ENCODE measurements at regions of chr12 and their contacts with region 1.

Region 1: DNA sequence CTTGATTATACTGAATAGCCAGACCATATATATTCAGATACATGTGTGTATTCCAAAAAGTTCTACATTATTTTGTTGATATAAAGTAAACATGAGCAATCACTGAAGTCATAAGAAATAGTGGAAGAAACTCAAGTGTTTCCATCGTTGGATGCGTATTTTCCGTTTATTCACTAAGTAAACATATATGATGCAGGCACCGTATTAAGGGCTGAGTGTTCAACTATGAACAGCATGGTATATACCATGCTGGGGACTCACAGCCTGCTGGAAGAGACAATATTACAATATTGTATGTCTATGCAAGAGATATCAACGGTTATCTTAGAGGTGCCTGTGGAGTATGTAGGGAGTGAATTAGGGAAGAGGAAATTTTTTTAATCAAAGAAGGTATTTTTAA is 1.2 kb downstream of the PYROXD1 start:
- DNase-seq: no peak
- H3K4me3 ChIP-seq: no peak overlapping the region; the same call in 1 of the 2 replicates
- H3K4me3 Mint-ChIP-seq: peak overlapping the region; percentile 85
- H3K27ac Mint-ChIP-seq: peak overlapping the region; percentile 81
- H3K4me1 ChIP-seq: peaks cover 9% of the 10 kb centered on the region
- H3K4me1 Mint-ChIP-seq: peaks cover 8% of the 10 kb centered on the region
- H3K27me3 ChIP-seq: peaks cover 5% of the 10 kb centered on the region
- H3K27me3 Mint-ChIP-seq: peaks cover 22% of the 10 kb centered on the region
- CTCF ChIP-seq: no peak

Region 2: DNA sequence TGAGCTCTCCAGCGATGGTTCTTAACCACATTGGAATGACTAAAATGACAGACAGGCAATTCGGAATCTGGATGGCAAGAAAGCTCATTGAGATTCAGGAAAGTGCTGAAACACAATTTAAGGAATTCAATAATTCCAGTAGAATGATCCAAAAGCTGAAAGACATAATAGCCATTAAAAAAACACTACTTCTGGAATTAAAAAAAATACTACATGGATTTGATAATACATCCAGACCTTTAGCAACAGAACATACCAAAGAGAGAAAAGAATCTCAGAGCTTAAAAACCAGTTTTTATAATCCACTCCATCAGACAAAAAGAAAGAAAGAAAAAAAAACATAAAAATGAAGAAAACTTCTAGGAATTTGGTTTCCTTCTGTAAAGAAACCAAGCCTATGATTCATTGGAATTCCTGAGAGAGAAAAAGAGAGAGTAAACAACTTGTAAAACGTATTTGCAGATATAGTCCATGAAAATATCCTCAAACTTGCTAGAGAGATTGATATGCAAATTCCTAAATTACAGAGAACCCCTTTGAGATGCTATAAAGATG is 254.8 kb before region 1 on chr12:
- CTCF ChIA-PET with region 1: no interaction called
- POLR2A ChIA-PET with region 1: no interaction called
- intact Hi-C with region 1: no loop called
- DNase-seq: no peak
- H3K4me3 ChIP-seq: no peak overlapping the region
- H3K4me3 Mint-ChIP-seq: no peak overlapping the region
- H3K27ac Mint-ChIP-seq: no peak overlapping the region
- H3K4me1 ChIP-seq: peaks cover 11% of the 10 kb centered on the region; the same call in 1 of the 2 replicates
- H3K4me1 Mint-ChIP-seq: peaks cover 12% of the 10 kb centered on the region
- H3K27me3 ChIP-seq: no peaks in the 10 kb centered on the region
- H3K27me3 Mint-ChIP-seq: peaks cover 6% of the 10 kb centered on the region
- CTCF ChIP-seq: no peak

Region 3: GRCh38 chr12:21248679-21249078 is 190.0 kb before region 1 on chr12:
- CTCF ChIA-PET with region 1: interaction called, 3 read pairs
- POLR2A ChIA-PET with region 1: no interaction called
- intact Hi-C with region 1: loop called (anchors 1 kb)
- DNase-seq: no peak
- H3K4me3 ChIP-seq: no peak overlapping the region
- H3K4me3 Mint-ChIP-seq: no peak overlapping the region
- H3K27ac Mint-ChIP-seq: no peak overlapping the region
- H3K4me1 ChIP-seq: no peaks in the 10 kb centered on the region
- H3K4me1 Mint-ChIP-seq: no peaks in the 10 kb centered on the region
- H3K27me3 ChIP-seq: no peaks in the 10 kb centered on the region
- H3K27me3 Mint-ChIP-seq: peaks cover 7% of the 10 kb centered on the region
- CTCF ChIP-seq: peak in 1 of 2 experiments; percentile 39

Region 4: GRCh38 chr12:21296751-21297406 is 141.8 kb before region 1 on chr12:
- CTCF ChIA-PET with region 1: interaction called, 10 read pairs
- POLR2A ChIA-PET with region 1: no interaction called
- intact Hi-C with region 1: loop called (anchors 1 kb)
- DNase-seq: peak in 1 of 2 experiments; percentile 27
- H3K4me3 ChIP-seq: no peak overlapping the region
- H3K4me3 Mint-ChIP-seq: no peak overlapping the region
- H3K27ac Mint-ChIP-seq: no peak overlapping the region
- H3K4me1 ChIP-seq: no peaks in the 10 kb centered on the region
- H3K4me1 Mint-ChIP-seq: no peaks in the 10 kb centered on the region
- H3K27me3 ChIP-seq: no peaks in the 10 kb centered on the region
- H3K27me3 Mint-ChIP-seq: peaks cover 3% of the 10 kb centered on the region
- CTCF ChIP-seq: peak; percentile 87 to 90

Region 5: GRCh38 chr12:21308785-21309184 is 129.9 kb before region 1 on chr12:
- CTCF ChIA-PET with region 1: no interaction called
- POLR2A ChIA-PET with region 1: no interaction called
- intact Hi-C with region 1: loop called (anchors 1 kb)
- DNase-seq: no peak
- H3K4me3 ChIP-seq: no peak overlapping the region
- H3K4me3 Mint-ChIP-seq: no peak overlapping the region
- H3K27ac Mint-ChIP-seq: no peak overlapping the region
- H3K4me1 ChIP-seq: no peaks in the 10 kb centered on the region
- H3K4me1 Mint-ChIP-seq: no peaks in the 10 kb centered on the region
- H3K27me3 ChIP-seq: no peaks in the 10 kb centered on the region; the same call in 1 of the 2 replicates
- H3K27me3 Mint-ChIP-seq: peaks cover 21% of the 10 kb centered on the region
- CTCF ChIP-seq: no peak

Region 6: GRCh38 chr12:21413369-21414277 is 25.0 kb before region 1 on chr12:
- CTCF ChIA-PET with region 1: interaction called, 3 read pairs
- POLR2A ChIA-PET with region 1: interaction called, 8 read pairs
- intact Hi-C with region 1: loop called (anchors 2 kb)
- DNase-seq: peak; percentile 58 to 66
- H3K4me3 ChIP-seq: no peak overlapping the region
- H3K4me3 Mint-ChIP-seq: no peak overlapping the region
- H3K27ac Mint-ChIP-seq: no peak overlapping the region
- H3K4me1 ChIP-seq: peaks cover 20% of the 10 kb centered on the region
- H3K4me1 Mint-ChIP-seq: peaks cover 18% of the 10 kb centered on the region
- H3K27me3 ChIP-seq: no peaks in the 10 kb centered on the region
- H3K27me3 Mint-ChIP-seq: no peaks in the 10 kb centered on the region
- CTCF ChIP-seq: no peak

Region 7: GRCh38 chr12:21428241-21428640 is 10.4 kb before region 1 on chr12:
- CTCF ChIA-PET with region 1: no interaction called
- POLR2A ChIA-PET with region 1: no interaction called
- intact Hi-C with region 1: no loop called
- DNase-seq: no peak
- H3K4me3 ChIP-seq: no peak overlapping the region
- H3K4me3 Mint-ChIP-seq: no peak overlapping the region
- H3K27ac Mint-ChIP-seq: no peak overlapping the region
- H3K4me1 ChIP-seq: no peaks in the 10 kb centered on the region
- H3K4me1 Mint-ChIP-seq: no peaks in the 10 kb centered on the region
- H3K27me3 ChIP-seq: no peaks in the 10 kb centered on the region
- H3K27me3 Mint-ChIP-seq: peaks cover 7% of the 10 kb centered on the region
- CTCF ChIP-seq: no peak

Region 8: DNA sequence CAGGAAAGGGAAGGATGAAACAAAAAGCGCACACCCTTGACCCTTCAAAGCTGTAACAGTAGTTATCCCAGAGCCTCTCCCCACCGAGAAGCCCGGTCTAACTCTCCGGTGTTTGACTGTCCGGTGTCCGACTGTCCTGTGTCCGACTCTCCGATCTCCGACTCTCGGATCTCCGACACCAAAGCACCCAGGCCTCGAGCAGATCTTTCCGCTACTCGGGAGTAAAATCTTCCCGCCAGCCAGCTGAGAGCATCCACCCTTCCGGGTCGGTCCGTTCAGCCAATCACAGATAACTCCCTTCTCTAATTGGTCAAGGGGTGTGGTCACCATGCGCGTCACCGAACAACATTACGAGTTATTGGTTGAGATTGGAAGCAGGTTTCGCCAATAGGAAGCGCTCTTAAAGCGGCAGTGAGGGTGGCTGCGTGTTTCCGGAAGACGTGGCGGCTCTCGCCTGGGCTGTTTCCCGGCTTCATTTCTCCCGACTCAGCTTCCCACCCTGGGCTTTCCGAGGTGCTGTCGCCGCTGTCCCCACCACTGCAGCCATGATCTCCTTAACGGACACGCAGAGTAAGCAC is 62.8 kb after region 1 on chr12 and contains the starts of genes GOLT1B and RECQL:
- CTCF ChIA-PET with region 1: no interaction called
- POLR2A ChIA-PET with region 1: interaction called, 5 read pairs
- intact Hi-C with region 1: loop called (anchors 1 kb)
- DNase-seq: peak; percentile 98
- H3K4me3 ChIP-seq: peak within 1 kb of the TSS; percentile 70
- H3K4me3 Mint-ChIP-seq: no peak within 1 kb of the TSS
- H3K27ac Mint-ChIP-seq: no peak within 1 kb of the TSS
- H3K4me1 ChIP-seq: no peaks in the 10 kb centered on the region; the same call in 1 of the 2 replicates
- H3K4me1 Mint-ChIP-seq: peaks cover 9% of the 10 kb centered on the region
- H3K27me3 ChIP-seq: no peaks in the 10 kb centered on the region
- H3K27me3 Mint-ChIP-seq: no peaks in the 10 kb centered on the region
- CTCF ChIP-seq: no peak
- total RNA-seq, gene GOLT1B: 75.9 and 81.7 TPM in 2 replicates
- total RNA-seq, gene RECQL: 50.7 and 55.3 TPM in 2 replicates

Region 9: DNA sequence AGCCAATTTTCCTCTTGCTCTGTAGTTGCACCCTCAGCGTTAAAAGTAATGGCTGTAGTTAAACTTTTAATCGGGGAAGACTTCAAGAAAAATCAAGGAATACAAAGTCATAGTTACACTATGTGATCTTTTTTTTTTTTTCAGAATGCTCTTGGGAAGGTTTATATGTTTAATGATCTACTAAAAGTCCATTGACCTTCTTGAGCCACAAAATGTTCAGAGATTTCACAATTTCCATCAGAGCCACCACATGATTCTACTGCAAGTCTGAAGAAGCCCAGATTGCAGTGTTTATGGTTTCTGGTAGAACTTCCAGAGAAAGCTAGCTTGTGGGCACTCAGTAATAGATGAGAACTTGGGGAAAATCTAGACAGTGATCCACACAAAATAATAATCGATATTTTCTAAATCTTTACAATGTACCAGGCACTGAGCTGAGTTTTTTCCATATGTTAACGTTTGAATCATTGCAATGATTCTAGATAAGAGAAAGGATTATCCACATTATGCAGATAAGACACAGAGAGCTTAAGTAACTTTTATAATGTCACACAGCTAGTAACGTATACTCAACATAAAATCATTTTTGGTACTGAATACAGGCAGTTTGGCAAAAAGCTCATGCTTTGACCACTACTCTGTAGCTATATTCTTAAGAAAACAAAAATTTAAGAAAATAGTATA is 127.7 kb after region 1 on chr12:
- CTCF ChIA-PET with region 1: no interaction called
- POLR2A ChIA-PET with region 1: no interaction called
- intact Hi-C with region 1: no loop called
- DNase-seq: peak in 1 of 2 experiments; percentile 28
- H3K4me3 ChIP-seq: no peak overlapping the region
- H3K4me3 Mint-ChIP-seq: no peak overlapping the region
- H3K27ac Mint-ChIP-seq: peak overlapping the region; percentile 81
- H3K4me1 ChIP-seq: peaks cover 31% of the 10 kb centered on the region
- H3K4me1 Mint-ChIP-seq: peaks cover 46% of the 10 kb centered on the region
- H3K27me3 ChIP-seq: no peaks in the 10 kb centered on the region
- H3K27me3 Mint-ChIP-seq: no peaks in the 10 kb centered on the region
- CTCF ChIP-seq: no peak

Measured in Caco-2 (cell line).